ENCODE measurements at regions of chr3 and their contacts with region 1.

Region 1: DNA sequence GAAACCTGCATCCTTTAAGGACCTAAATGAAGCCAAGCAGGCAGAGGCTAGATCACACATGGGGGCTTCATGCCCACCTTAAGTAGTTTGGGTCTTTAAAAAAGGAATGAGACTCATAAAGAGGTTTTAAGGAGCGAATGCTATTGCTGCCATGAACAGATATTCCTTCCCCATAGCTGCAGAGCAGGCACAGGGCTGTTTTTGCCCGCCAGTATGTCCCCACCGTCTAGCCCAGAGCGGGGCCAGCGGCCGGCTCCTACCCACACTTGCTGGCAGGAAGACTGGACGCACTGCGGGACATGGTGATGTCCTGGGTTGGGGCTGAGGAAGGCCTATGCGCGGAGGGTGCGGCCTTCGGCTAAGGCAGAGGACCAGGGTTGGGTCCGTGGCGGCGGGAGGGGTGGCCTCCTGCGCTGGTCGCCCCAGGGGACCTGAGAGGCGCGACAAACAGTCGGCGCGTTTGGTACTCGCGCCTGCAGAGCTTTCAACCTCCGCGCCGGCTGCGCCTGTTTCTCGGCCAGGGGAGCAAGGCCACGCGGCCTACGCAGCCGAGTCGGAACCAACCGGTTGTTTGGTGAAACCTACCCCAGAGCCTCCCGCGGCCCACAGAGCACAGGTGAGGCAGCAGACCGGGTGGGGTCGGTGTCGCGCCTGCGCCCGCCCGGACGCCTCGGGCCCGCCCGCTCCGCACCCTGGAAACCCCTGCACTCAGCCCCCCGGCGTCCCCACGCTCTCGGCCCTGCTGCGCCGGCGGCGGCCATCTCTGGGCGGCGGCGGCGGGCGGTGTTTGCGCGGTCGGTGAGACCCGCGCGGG is at the start of gene FAIM:
- DNase-seq: peak; percentile 51 to 81 (median 77)
- H3K4me3 ChIP-seq: peak within 1 kb of the TSS; percentile 63
- H3K4me3 Mint-ChIP-seq: peak within 1 kb of the TSS; percentile 80 to 97 (median 91)
- H3K27ac ChIP-seq: peak within 1 kb of the TSS; percentile 69
- H3K27ac Mint-ChIP-seq: peak within 1 kb of the TSS; percentile 92 to 99 (median 95)
- H3K4me1 ChIP-seq: peaks cover 13% of the 10 kb centered on the region
- H3K4me1 Mint-ChIP-seq: peaks cover 12 to 25% (median 15%) of the 10 kb centered on the region in 3 donors
- H3K27me3 ChIP-seq: no peaks in the 10 kb centered on the region
- H3K27me3 Mint-ChIP-seq: peaks cover 0 to 14% of the 10 kb centered on the region in 2 donors
- total RNA-seq, gene FAIM: 8.4 to 8.5 TPM

Region 2: GRCh38 chr3:138594150-138594934 is 14.2 kb before region 1 on chr3 and contains the start of gene CEP70:
- CTCF ChIA-PET with region 1: interaction called, 25 read pairs
- POLR2A ChIA-PET with region 1: interaction called, 18 read pairs
- DNase-seq: peak; percentile 87 to 94 (median 92)
- H3K4me3 ChIP-seq: peak within 1 kb of the TSS; percentile 94
- H3K4me3 Mint-ChIP-seq: peak within 1 kb of the TSS; percentile 85 to 98 (median 95)
- H3K27ac ChIP-seq: peak within 1 kb of the TSS; percentile 87
- H3K27ac Mint-ChIP-seq: peak within 1 kb of the TSS; percentile 85 to 100 (median 95)
- H3K4me1 ChIP-seq: no peaks in the 10 kb centered on the region
- H3K4me1 Mint-ChIP-seq: peaks cover 6 to 10% (median 9%) of the 10 kb centered on the region in 3 donors
- H3K27me3 ChIP-seq: no peaks in the 10 kb centered on the region
- H3K27me3 Mint-ChIP-seq: peaks cover 0 to 1% of the 10 kb centered on the region in 2 donors
- total RNA-seq, gene CEP70: 8.0 to 8.4 TPM

Region 3: DNA sequence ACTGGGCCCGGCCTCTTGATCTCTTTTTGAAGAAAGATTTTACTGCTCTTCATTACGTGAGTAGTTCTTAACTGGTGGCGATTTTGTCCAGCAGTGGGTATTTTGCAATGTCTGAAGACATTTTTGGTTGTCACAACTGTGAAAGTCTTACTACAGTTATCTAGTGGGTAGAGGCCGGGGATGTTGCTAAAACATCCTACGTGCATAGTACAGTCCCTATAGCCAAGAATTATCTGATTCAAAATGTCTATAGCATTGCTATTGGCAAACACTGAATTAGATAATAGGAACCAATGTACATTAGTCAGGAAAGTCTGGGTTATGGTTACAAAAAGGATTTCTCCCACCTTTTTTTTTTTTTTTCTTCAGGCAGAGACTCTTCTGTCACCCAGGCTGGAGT is 300.3 kb after region 1 on chr3:
- CTCF ChIA-PET with region 1: no interaction called
- POLR2A ChIA-PET with region 1: no interaction called
- DNase-seq: no peak
- H3K4me3 ChIP-seq: no peak overlapping the region
- H3K4me3 Mint-ChIP-seq: no peak overlapping the region
- H3K27ac ChIP-seq: no peak overlapping the region
- H3K27ac Mint-ChIP-seq: no peak overlapping the region
- H3K4me1 ChIP-seq: no peaks in the 10 kb centered on the region
- H3K4me1 Mint-ChIP-seq: no peaks in the 10 kb centered on the region
- H3K27me3 ChIP-seq: no peaks in the 10 kb centered on the region
- H3K27me3 Mint-ChIP-seq: peaks cover 0 to 7% of the 10 kb centered on the region in 2 donors

Measured in CD8-positive, alpha-beta memory T cell (primary cell).